WTC11 (cell line): ENCODE measurements at regions of chr12 and their contacts with region 1.

Region 1: GRCh38 chr12:119412811-119413794 is 78.6 kb downstream of the CCDC60 start:
- DNase-seq: peak; percentile 91
- ATAC-seq: peak; percentile 77
- H3K4me3 Mint-ChIP-seq: peak overlapping the region; percentile 43
- H3K27ac Mint-ChIP-seq: no peak overlapping the region
- H3K4me1 Mint-ChIP-seq: peaks cover 26% of the 10 kb centered on the region
- H3K27me3 Mint-ChIP-seq: no peaks in the 10 kb centered on the region; the same call in 1 of the 2 replicates
- CTCF ChIP-seq: peak; percentile 83

Region 2: DNA sequence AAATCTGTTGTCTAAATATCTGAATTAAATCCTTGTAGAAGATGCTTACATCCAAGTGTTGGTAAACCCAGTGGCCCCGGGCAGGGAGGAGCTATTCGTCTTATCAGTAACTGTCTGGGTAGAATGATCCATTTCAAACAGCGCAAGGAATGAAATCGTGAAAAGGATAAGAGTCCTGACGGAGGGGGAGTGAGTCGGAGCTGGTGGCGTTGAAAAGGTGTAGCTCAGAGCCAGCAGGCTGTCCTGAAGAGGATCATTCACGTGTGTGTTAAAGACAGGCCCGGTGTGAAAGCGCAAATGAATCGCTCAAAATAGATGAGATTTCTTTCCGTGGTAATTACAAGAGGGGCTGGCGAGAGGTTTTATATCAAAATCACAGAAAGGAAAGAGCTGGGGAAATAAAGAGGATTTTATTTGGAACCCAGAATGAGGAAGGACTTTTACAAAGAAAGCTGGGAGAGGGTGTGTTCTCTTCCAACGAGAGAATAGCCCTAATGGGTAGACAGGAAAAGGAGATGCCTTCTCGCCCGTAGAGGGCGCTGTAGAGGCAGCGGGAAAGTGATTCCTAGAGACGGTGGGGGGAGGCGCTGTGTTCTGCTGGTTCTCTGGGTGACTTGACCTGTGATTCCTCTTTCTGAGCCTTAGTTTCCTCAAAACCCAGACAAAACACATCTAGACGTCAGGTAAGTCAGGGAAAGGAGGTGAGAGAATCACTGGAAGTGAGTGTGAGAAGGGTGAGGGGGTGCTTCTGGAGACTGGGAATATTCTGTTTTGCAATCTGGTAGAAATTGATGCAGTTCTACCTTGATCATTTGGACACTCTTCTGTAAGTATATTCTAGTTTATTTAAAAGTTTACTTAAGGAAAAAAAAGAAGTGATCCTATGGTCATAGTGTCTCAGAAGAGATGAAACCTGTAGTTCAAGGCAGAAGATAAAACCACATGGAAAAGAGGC is 392.4 kb before region 1 on chr12:
- CTCF ChIA-PET with region 1: interaction called, 17 read pairs
- POLR2A ChIA-PET with region 1: no interaction called
- DNase-seq: peak; percentile 93
- ATAC-seq: peak; percentile 96
- H3K4me3 Mint-ChIP-seq: peak overlapping the region; percentile 53
- H3K27ac Mint-ChIP-seq: no peak overlapping the region
- H3K4me1 Mint-ChIP-seq: peaks cover 38% of the 10 kb centered on the region
- H3K27me3 Mint-ChIP-seq: no peaks in the 10 kb centered on the region
- CTCF ChIP-seq: peak; percentile 85

Region 3: DNA sequence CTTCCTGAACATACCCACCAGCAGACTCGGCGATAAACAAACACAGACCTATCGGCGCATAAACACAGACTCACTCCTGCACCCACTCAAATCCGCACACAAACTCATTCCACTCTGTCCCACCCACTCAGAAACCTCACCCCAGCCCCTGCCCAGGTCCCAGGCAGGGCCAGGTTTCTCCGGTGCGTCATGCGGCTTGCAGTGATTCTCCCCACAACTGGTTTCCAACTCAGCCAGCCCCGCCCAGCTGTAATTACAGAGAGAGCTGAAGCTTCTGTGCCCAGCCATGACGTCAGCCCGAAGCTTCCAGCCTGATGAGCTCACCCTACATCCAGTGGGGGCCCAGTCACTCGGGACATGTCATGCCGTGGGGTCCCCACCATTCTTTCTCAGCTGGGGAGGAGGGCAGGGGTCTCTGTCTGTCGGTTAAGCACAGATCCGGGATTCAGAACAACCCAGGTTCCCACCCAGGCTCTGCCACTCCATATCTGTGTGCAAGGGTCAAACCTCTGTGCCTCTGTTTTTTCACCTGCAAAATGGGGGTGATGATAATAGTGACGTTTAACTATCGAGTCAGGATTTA is 236.7 kb before region 1 on chr12:
- CTCF ChIA-PET with region 1: interaction called, 15 read pairs
- POLR2A ChIA-PET with region 1: no interaction called
- DNase-seq: peak; percentile 26
- ATAC-seq: no peak
- H3K4me3 Mint-ChIP-seq: no peak overlapping the region
- H3K27ac Mint-ChIP-seq: peak overlapping the region; percentile 22; the same call in 1 of the 2 replicates
- H3K4me1 Mint-ChIP-seq: peaks cover 55% of the 10 kb centered on the region
- H3K27me3 Mint-ChIP-seq: no peaks in the 10 kb centered on the region
- CTCF ChIP-seq: no peak

Region 4: DNA sequence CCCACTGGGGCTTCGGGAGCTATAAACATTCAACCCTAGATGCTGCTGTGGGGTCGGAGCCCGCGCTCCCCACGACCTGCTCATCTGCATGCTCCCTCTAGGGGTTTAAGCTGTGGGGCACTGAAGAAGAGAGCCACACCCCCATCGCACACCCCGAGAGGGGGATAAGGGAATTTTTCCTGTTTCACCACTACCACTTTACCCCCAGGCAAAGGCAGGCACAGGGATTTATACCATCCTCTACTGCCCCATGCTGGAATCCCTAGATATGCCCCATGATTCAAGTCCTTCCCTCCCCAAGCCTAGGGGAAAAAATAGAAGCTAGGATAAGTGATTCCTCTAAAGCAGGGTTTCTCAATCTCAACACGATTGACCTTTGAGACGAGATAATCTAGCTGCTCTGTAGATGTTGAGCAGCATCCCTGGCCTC is 138.5 kb before region 1 on chr12:
- CTCF ChIA-PET with region 1: interaction called, 16 read pairs
- POLR2A ChIA-PET with region 1: no interaction called
- DNase-seq: peak; percentile 26
- ATAC-seq: peak; percentile 86
- H3K4me3 Mint-ChIP-seq: no peak overlapping the region
- H3K27ac Mint-ChIP-seq: no peak overlapping the region
- H3K4me1 Mint-ChIP-seq: peaks cover 36% of the 10 kb centered on the region
- H3K27me3 Mint-ChIP-seq: no peaks in the 10 kb centered on the region
- CTCF ChIP-seq: no peak

Region 5: GRCh38 chr12:119340578-119340977 is 72.5 kb before region 1 on chr12:
- CTCF ChIA-PET with region 1: interaction called, 10 read pairs
- POLR2A ChIA-PET with region 1: no interaction called
- DNase-seq: no peak
- ATAC-seq: no peak
- H3K4me3 Mint-ChIP-seq: no peak overlapping the region
- H3K27ac Mint-ChIP-seq: no peak overlapping the region
- H3K4me1 Mint-ChIP-seq: peaks cover 24% of the 10 kb centered on the region
- H3K27me3 Mint-ChIP-seq: peaks cover 79% of the 10 kb centered on the region
- CTCF ChIP-seq: no peak

Region 6: GRCh38 chr12:119399301-119399700 is 13.8 kb before region 1 on chr12:
- CTCF ChIA-PET with region 1: interaction called, 11 read pairs
- POLR2A ChIA-PET with region 1: no interaction called
- DNase-seq: no peak
- ATAC-seq: no peak
- H3K4me3 Mint-ChIP-seq: no peak overlapping the region
- H3K27ac Mint-ChIP-seq: no peak overlapping the region
- H3K4me1 Mint-ChIP-seq: no peaks in the 10 kb centered on the region
- H3K27me3 Mint-ChIP-seq: peaks cover 10% of the 10 kb centered on the region
- CTCF ChIP-seq: no peak

Region 7: DNA sequence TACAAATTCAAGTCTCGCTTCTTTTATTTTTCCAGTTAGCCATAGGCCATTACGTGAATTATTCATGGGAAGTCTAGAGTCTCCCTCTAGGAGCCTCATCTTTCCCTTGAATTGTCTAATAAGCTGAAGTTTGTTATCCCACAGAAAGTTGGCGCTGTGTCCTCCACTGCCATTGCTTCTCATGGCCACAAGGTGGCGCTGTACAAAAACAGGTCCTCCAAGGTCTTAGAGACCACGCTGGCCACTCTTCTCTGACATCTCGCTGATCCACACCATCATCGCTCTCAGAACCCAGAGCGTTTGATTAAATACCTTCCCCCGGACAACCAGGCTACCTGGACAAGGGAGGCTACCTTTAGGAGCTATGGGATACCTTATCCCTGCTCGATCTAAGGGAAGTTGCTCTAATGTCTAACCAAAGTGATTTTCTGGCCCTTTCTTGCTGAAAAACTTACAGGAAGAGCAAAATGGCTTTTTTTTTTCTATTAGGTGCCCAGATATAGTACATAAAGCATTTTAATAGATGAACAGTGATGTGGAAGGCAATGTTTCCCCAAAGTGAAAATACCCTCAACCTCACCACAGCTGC is 31.4 kb after region 1 on chr12:
- CTCF ChIA-PET with region 1: interaction called, 21 read pairs
- POLR2A ChIA-PET with region 1: no interaction called
- DNase-seq: peak; percentile 79
- ATAC-seq: peak; percentile 94
- H3K4me3 Mint-ChIP-seq: peak overlapping the region; percentile 57
- H3K27ac Mint-ChIP-seq: no peak overlapping the region
- H3K4me1 Mint-ChIP-seq: peaks cover 11% of the 10 kb centered on the region
- H3K27me3 Mint-ChIP-seq: no peaks in the 10 kb centered on the region; the same call in 1 of the 2 replicates
- CTCF ChIP-seq: peak; percentile 99

Region 8: GRCh38 chr12:119594772-119595445 is 181.8 kb after region 1 on chr12:
- CTCF ChIA-PET with region 1: no interaction called
- POLR2A ChIA-PET with region 1: no interaction called
- DNase-seq: peak; percentile 37
- ATAC-seq: peak; percentile 52
- H3K4me3 Mint-ChIP-seq: peak overlapping the region; percentile 84
- H3K27ac Mint-ChIP-seq: no peak overlapping the region
- H3K4me1 Mint-ChIP-seq: peaks cover 27% of the 10 kb centered on the region
- H3K27me3 Mint-ChIP-seq: peaks cover 98% of the 10 kb centered on the region
- CTCF ChIP-seq: no peak